ENCODE measurements at regions of chr12 and their contacts with region 1.

Region 1: DNA sequence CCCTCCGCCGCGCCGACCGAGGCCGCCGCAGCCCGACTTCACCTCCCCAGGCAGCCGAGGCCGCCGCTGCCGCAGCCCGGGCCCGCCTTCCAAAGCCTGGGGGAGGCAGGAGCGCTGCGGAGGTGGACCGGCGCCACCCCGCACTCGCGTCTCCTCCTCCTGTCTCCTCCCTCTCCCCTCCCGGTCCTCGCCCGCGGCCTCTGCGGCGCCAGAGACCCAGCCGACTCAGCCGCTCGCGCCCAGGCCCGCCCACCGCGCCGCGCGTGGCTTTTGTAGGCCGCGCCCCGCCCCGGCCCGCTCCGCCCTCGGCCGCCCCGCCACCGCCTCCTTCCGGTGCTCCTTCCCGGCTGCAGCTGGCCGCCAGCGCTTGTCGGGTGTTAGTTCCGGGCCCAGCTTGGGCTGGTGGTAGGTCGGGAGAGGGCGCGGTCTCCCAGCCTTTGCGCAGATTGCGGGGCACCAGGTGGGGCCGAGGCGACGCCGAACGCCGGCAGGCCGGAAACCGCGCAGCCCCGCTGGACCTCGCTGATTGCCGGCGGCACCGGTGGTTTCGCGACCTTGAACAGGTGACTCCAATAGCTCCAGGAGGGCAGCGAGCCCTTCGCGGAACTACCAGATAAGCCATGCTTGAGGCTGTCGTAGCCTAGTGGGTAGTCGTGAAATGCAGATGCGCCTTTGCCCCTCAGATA is at the start of gene CAPRIN2:
- DNase-seq: peak; percentile 96
- H3K4me3 Mint-ChIP-seq: peak within 1 kb of the TSS; percentile 95
- H3K27ac Mint-ChIP-seq: peak within 1 kb of the TSS; percentile 83
- H3K4me1 Mint-ChIP-seq: peaks cover 43% of the 10 kb centered on the region
- H3K27me3 Mint-ChIP-seq: no peaks in the 10 kb centered on the region
- total RNA-seq, gene CAPRIN2: 10.0 to 11.5 TPM

Region 2: DNA sequence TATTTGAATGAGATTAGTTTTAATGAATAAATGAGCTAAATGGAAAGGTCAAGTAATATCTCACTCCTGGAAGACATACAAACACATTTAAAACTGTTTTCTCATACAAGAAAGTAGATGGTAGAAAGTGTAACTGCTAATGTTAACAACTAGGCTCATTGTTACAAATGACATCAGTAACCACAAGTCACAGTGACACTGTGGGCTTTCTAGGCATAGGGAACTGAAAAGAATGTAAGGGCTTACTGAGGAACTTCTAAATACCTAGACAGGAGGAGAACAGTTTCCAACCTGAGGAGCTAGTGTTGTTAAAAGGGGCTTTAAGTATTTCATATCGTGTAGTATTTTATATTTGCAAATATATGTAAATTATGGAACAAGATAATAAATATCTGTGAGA is 1356.4 kb before region 1 on chr12:
- CTCF ChIA-PET with region 1: no interaction called
- POLR2A ChIA-PET with region 1: no interaction called
- intact Hi-C with region 1: loop called (anchors 5 kb)
- DNase-seq: no peak
- H3K4me3 Mint-ChIP-seq: no peak overlapping the region
- H3K27ac Mint-ChIP-seq: no peak overlapping the region
- H3K4me1 Mint-ChIP-seq: no peaks in the 10 kb centered on the region
- H3K27me3 Mint-ChIP-seq: no peaks in the 10 kb centered on the region

Region 3: GRCh38 chr12:30384976-30385375 is 369.9 kb before region 1 on chr12:
- CTCF ChIA-PET with region 1: no interaction called
- POLR2A ChIA-PET with region 1: no interaction called
- intact Hi-C with region 1: no loop called
- DNase-seq: no peak
- H3K4me3 Mint-ChIP-seq: no peak overlapping the region
- H3K27ac Mint-ChIP-seq: no peak overlapping the region
- H3K4me1 Mint-ChIP-seq: no peaks in the 10 kb centered on the region
- H3K27me3 Mint-ChIP-seq: no peaks in the 10 kb centered on the region

Region 4: DNA sequence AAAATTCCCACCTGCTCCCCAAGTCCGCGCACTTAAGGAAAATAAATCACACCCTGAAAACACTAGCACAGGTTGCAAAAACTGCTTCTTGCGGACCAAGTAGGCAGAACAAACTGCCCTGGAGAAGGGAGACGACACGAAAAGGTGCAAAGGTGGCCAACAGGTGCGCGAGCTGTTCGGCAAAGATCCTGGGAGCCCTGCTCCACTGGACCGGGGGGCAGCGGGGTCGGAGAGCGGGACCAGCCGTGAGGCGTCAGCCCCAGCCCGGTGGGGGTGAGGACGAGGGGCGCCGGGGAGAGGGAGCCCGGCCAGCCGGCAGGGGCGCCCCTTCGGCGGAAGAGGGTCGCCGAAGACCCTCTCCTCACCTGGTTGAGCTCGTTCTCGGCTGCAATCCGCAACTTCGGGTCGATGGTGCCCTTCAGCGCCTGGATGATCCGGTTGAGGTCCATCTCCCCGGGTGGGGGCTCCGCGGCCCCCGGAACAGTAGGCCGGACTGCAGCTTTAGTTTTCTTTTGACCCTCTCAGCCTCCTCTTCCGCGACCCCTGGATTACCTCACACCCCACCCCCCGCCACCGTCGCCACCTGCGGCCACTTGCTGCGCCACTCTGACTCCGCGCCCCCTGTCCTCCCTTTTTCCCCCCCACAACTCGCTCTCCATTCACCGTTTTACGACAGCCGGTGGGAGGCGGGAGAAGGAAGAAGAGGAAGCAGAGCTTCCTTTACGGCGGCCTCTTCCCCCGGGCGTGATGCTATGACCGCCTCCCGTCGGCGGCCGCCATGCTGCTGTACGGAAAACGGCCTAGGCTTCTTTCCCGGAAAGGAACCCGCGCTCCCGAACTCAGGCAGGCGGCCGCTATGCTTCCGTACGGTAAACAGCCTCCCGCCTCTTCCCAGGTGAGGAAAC is 59.4 kb before region 1 on chr12 and contains the start of gene IPO8:
- CTCF ChIA-PET with region 1: interaction called, 11 read pairs
- POLR2A ChIA-PET with region 1: interaction called, 6 read pairs
- intact Hi-C with region 1: loop called (anchors 1 kb)
- DNase-seq: peak; percentile 90
- H3K4me3 Mint-ChIP-seq: peak within 1 kb of the TSS; percentile 88
- H3K27ac Mint-ChIP-seq: peak within 1 kb of the TSS; percentile 84
- H3K4me1 Mint-ChIP-seq: peaks cover 32% of the 10 kb centered on the region
- H3K27me3 Mint-ChIP-seq: no peaks in the 10 kb centered on the region
- total RNA-seq, gene IPO8: 39.2 to 41.3 TPM

Region 5: DNA sequence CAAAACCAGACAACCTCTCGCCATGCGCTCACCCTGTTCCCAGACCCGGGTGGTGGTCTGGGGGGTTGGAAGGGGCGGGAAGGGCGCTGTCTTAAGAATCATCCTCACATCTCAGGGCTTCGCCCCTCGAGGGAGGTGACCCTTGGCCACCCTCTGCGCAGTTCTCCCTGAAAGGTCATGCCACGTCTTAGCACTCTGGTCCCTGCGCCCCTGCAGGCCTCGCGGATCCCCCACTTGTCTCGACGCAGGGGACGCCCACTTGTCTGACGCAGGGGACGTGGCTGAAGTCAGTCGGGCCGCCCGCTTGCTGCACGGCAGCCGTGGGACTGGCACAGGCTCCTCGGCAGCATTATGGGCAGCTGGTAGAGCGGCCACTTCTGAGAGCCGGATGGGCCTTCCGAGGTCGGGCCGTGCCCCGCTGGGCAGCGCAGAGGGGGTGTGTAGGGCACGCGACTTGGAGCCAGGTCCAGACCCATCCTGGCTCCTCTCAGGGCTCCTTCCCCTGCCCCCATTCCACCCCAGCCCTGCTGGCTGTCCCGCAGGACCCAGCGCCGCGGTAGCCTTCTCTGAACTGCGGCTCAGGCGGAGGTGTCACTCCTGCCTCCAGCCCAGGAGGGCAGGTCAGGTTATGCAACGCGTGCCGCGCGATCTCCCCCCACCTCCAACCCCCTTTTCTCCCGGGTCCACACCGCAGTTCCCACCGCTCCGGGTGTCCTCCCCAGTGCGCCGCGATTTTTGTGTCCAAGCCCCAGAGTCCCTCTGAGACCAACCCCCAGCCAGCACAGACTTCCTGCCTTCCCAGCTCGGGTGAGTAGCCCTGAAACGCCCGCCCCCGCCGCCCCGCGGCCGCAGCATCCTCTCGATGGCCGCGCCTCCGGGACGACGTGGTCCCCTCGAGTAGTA is 40.8 kb after region 1 on chr12:
- CTCF ChIA-PET with region 1: interaction called, 3 read pairs
- POLR2A ChIA-PET with region 1: interaction called, 4 read pairs
- intact Hi-C with region 1: loop called (anchors 1 kb)
- DNase-seq: peak; percentile 86
- H3K4me3 Mint-ChIP-seq: peak overlapping the region; percentile 74
- H3K27ac Mint-ChIP-seq: peak overlapping the region; percentile 66
- H3K4me1 Mint-ChIP-seq: peaks cover 16% of the 10 kb centered on the region
- H3K27me3 Mint-ChIP-seq: peaks cover 38% of the 10 kb centered on the region

Region 6: DNA sequence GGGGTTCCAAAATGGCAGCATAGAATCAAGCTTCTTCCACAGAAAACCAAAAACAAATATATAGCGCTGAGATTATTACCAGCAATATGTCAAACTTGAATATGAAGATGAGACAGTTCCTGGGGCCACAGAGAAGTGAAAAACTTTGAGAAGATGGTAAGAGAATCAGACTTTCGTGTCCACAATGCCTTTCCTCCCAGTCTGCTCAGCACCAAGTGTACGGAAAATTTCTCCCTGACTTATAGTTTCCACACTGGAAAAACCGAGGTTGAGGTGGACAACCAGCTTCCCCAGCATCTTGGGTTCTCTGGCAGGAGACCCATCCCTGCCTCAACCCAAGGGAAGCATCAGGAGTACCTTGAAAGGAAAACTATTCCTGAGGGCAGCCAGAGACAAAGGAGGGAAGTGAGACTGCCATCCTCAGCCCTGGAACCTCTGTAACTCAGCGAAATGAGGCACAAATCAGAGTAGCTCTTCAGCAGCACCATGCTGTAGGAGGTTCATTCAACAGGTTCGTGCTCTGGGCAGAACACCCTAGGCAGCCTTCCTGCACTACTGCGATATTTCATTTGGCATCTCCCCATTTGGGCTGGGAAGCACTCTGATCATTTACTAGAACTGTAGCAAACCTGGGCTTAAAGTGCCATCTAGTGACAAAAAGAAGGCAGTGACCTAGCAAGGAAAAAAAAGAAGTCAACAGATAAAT is 52.3 kb after region 1 on chr12:
- CTCF ChIA-PET with region 1: interaction called, 13 read pairs
- POLR2A ChIA-PET with region 1: no interaction called
- intact Hi-C with region 1: loop called (anchors 1 kb)
- DNase-seq: peak; percentile 16
- H3K4me3 Mint-ChIP-seq: no peak overlapping the region
- H3K27ac Mint-ChIP-seq: no peak overlapping the region
- H3K4me1 Mint-ChIP-seq: no peaks in the 10 kb centered on the region
- H3K27me3 Mint-ChIP-seq: peaks cover 13% of the 10 kb centered on the region

Region 7: DNA sequence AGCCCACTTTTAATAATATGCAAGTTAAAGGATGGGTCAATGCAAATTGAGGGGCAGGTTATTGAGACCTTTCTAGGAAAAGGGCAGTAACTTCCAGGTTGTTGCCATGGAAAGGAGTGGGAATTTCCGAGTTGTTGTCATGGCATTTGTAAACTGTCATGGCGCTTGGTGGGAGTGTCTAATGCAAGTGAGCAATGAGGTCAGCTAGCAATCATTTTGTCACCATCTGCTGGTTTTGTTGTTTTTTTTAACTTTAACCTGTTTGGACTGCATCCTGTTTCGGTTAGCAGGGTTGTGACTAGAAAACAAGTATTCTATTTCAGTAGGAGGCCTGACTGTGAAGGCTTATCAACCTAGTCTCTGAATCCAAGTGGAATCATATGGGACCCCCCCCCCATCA is 85.9 kb after region 1 on chr12:
- CTCF ChIA-PET with region 1: no interaction called
- POLR2A ChIA-PET with region 1: no interaction called
- intact Hi-C with region 1: loop called (anchors 5 kb)
- DNase-seq: no peak
- H3K4me3 Mint-ChIP-seq: no peak overlapping the region
- H3K27ac Mint-ChIP-seq: no peak overlapping the region
- H3K4me1 Mint-ChIP-seq: no peaks in the 10 kb centered on the region
- H3K27me3 Mint-ChIP-seq: peaks cover 5% of the 10 kb centered on the region

Region 8: GRCh38 chr12:30862486-30862885 is 107.6 kb after region 1 on chr12:
- CTCF ChIA-PET with region 1: no interaction called
- POLR2A ChIA-PET with region 1: no interaction called
- intact Hi-C with region 1: no loop called
- DNase-seq: no peak
- H3K4me3 Mint-ChIP-seq: no peak overlapping the region
- H3K27ac Mint-ChIP-seq: no peak overlapping the region
- H3K4me1 Mint-ChIP-seq: no peaks in the 10 kb centered on the region
- H3K27me3 Mint-ChIP-seq: peaks cover 11% of the 10 kb centered on the region

Region 9: GRCh38 chr12:31259136-31259886 is 504.5 kb after region 1 on chr12:
- CTCF ChIA-PET with region 1: no interaction called
- POLR2A ChIA-PET with region 1: no interaction called
- intact Hi-C with region 1: no loop called
- DNase-seq: no peak
- H3K4me3 Mint-ChIP-seq: no peak overlapping the region
- H3K27ac Mint-ChIP-seq: no peak overlapping the region
- H3K4me1 Mint-ChIP-seq: peaks cover 5% of the 10 kb centered on the region
- H3K27me3 Mint-ChIP-seq: no peaks in the 10 kb centered on the region

Region 10: DNA sequence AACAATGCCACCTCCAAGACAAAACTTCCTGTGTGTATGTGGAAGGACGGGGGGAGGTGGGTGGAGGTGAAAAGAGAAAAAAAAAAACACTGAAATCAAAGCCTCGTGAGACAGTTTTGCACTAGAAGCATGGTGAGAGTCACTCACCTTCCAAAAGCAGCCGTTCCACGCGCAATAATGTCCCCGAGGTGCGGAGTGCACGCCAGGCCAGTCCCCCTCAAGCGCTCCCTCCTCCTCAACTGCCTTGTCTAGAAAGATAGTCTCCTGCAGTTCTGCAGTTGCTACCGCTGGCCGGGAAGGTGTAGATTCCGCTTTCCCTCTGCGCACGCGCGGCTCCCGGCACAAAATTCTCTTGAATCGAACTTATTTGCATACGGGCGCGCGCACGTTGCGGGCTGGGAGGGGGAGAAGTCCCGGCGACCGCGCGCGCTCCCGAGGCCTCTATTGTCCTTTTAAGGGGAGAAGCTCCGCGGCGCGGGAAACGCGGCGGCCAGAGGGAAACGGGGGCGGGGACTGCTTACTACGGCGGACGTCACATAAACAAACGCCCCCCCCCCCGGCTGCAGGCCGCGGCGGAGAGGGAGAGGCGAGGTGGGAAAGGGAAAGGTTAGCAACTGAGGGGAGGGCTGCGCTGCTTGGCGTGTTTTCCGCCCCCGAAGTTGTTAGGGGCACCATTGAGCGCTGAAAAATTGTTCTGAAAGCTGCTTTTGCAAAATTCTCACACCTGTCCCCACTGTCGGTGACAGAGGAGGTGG is 571.2 kb after region 1 on chr12 and contains the start of gene SINHCAF:
- CTCF ChIA-PET with region 1: no interaction called
- POLR2A ChIA-PET with region 1: no interaction called
- intact Hi-C with region 1: loop called (anchors 1 kb)
- DNase-seq: peak; percentile 99
- H3K4me3 Mint-ChIP-seq: peak within 1 kb of the TSS; percentile 100
- H3K27ac Mint-ChIP-seq: peak within 1 kb of the TSS; percentile 99
- H3K4me1 Mint-ChIP-seq: peaks cover 24% of the 10 kb centered on the region
- H3K27me3 Mint-ChIP-seq: peaks cover 2% of the 10 kb centered on the region
- total RNA-seq, gene SINHCAF: 181 to 186 TPM